Psoas muscle (tissue), 8 donors: ENCODE measurements at regions of chr11 and their contacts with region 1.

Region 1: GRCh38 chr11:9314291-9315036 is at the start of gene TMEM41B:
- DNase-seq: peak; percentile 99
- ATAC-seq: peak; percentile 98
- H3K4me3 ChIP-seq: peak within 1 kb of the TSS; percentile 97
- H3K27ac ChIP-seq: peak within 1 kb of the TSS; percentile 87
- H3K4me1 ChIP-seq: peaks cover 8% of the 10 kb centered on the region
- H3K27me3 ChIP-seq: no peaks in the 10 kb centered on the region
- CTCF ChIP-seq: no peak
- total RNA-seq, gene TMEM41B: 12.2 to 14.6 (median 13.8) TPM

Region 2: GRCh38 chr11:9265211-9266131 is 49.0 kb before region 1 on chr11 and contains the start of gene DENND5A:
- intact Hi-C with region 1: loop called (anchors 5 kb)
- DNase-seq: peak; percentile 86 to 92
- ATAC-seq: peak; percentile 87 to 94 (median 93)
- H3K4me3 ChIP-seq: peak within 1 kb of the TSS; percentile 87
- H3K27ac ChIP-seq: peak within 1 kb of the TSS; percentile 87
- H3K4me1 ChIP-seq: peaks cover 12% of the 10 kb centered on the region
- H3K27me3 ChIP-seq: no peaks in the 10 kb centered on the region
- CTCF ChIP-seq: no peak
- total RNA-seq, gene DENND5A: 27.2 to 45.1 (median 32.3) TPM

Region 3: GRCh38 chr11:9363954-9364912 is 49.8 kb after region 1 on chr11:
- intact Hi-C with region 1: loop called (anchors 1 to 5 kb)
- DNase-seq: peak; percentile 97 to 98
- ATAC-seq: peak; percentile 99 to 100 (median 99)
- H3K4me3 ChIP-seq: peak overlapping the region; percentile 67
- H3K27ac ChIP-seq: peak overlapping the region; percentile 100
- H3K4me1 ChIP-seq: peaks cover 3% of the 10 kb centered on the region
- H3K27me3 ChIP-seq: no peaks in the 10 kb centered on the region
- CTCF ChIP-seq: no peak

Region 4: DNA sequence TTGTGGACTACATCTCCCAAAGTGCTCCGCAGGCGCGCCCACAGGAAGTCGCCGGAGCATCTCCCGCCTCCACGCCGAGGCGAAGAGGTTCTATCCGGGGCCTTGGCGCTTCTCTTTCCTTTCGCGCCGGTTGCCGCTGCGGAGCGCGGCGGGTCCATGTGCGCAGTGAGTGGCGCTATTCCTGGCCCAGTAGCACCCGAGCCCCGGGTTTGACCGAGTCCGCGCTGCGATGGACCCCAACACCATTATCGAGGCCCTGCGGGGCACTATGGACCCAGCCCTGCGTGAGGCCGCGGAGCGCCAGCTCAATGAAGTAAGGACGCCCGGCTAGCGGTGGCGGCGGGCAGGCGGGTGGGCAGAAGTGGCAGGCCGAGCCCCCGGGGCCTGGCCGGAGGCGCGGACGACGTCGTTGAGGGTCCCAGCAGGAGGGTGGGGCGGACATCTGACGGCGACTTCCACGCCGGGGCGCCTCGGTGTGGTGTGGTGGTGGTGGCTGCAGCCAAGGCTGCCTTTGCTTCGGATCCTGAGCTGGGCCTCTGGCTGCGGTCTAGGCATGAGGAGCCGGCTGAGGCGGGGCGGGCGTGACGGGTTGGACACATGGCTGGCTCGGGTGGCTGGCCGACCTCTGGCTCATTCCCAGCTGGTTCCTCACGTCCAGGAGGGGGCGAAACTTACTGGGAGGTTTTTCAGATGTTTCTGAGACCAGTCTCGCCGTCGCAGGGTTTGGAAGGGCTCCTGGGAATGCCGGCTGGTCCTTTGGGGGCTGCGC is 70.3 kb after region 1 on chr11 and contains the start of gene IPO7:
- intact Hi-C with region 1: loop called in 1 of 2 experiments (anchors 2 kb)
- DNase-seq: peak; percentile 92 to 95
- ATAC-seq: peak; percentile 95 to 97 (median 96)
- H3K4me3 ChIP-seq: peak within 1 kb of the TSS; percentile 96
- H3K27ac ChIP-seq: peak within 1 kb of the TSS; percentile 99
- H3K4me1 ChIP-seq: peaks cover 22% of the 10 kb centered on the region
- H3K27me3 ChIP-seq: no peaks in the 10 kb centered on the region
- CTCF ChIP-seq: peak; percentile 33
- total RNA-seq, gene IPO7: 222 to 355 (median 261) TPM